GM10248 (cell line): ENCODE measurements at regions of chr11 and their contacts with region 1.

Region 1: GRCh38 chr11:6443269-6444003 is 2.6 kb upstream of the HPX start:
- DNase-seq: peak; percentile 75
- CTCF ChIP-seq: peak; percentile 88

Region 2: GRCh38 chr11:6229911-6230310 is 213.5 kb before region 1 on chr11:
- CTCF ChIA-PET with region 1: no interaction called
- POLR2A ChIA-PET with region 1: no interaction called
- DNase-seq: no peak
- CTCF ChIP-seq: no peak

Region 3: GRCh38 chr11:6353367-6353987 is 90.0 kb before region 1 on chr11:
- CTCF ChIA-PET with region 1: interaction called, 18 read pairs
- POLR2A ChIA-PET with region 1: no interaction called
- DNase-seq: peak; percentile 67
- CTCF ChIP-seq: peak; percentile 95

Region 4: DNA sequence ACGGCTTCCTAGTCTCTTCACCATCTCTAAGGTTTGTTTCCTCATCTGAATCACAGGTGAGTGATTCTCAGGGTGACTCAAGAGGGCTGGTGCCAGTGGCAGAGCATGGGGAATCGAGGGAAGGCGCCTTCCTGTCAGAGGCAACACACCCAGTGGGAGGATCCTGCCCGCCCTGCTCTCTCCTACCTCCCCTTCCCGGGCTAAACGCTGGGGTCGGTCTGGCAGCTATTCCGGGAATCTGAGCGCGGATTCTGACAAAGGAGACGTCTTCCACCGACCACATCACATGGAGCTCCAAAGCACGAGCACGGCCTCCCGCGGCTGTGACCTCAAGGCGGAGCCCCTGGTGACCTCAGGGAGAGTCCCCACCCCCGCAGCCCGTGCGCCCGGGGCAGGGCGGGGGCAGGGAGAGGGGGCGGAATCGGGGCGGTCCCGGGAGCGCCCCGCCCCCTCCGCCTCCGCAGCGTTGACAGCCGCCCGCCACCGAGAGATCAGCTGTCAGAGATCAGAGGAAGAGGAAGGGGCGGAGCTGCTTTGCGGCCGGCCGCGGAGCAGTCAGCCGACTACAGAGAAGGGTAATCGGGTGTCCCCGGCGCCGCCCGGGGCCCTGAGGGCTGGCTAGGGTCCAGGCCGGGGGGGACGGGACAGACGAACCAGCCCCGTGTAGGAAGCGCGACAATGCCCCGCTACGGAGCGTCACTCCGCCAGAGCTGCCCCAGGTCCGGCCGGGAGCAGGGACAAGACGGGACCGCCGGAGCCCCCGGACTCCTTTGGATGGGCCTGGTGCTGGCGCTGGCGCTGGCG is 53.3 kb before region 1 on chr11 and contains the start of gene SMPD1:
- CTCF ChIA-PET with region 1: interaction called, 15 read pairs
- POLR2A ChIA-PET with region 1: no interaction called
- DNase-seq: peak; percentile 97
- CTCF ChIP-seq: no peak

Region 5: DNA sequence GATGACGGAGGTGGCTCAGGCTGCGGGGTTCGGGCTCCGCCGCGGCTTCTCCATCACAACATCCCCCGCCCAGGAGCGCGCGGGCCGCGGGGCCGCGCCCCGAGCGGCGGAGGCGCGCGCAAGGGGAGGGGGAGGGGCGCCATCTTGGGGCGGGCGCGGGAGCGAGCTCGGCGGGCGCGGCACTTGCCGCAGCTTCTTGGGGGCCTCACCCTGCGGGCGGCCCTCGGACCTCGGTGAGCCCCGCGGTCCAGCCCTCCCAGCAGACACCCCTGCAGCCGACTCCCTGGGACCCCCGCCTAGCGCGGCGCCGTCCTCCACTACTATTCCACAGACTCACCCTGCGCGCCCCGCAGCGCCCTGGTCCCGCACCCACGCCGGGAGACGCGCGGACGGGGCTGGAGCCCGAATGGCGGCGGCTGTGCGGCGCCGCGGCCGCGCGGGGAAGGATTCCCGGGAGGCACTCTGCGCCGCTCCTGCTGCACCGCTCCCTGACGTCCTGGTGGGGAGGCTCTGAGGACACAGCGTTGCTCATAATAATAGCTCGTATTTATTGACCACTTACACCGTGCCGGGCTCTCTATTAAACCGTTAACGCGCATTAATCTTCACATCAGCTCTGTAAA is 24.3 kb before region 1 on chr11 and contains the start of gene APBB1:
- CTCF ChIA-PET with region 1: interaction called, 136 read pairs
- POLR2A ChIA-PET with region 1: no interaction called
- DNase-seq: peak; percentile 76
- CTCF ChIP-seq: no peak

Region 6: GRCh38 chr11:6458352-6459098 is 15.1 kb after region 1 on chr11:
- CTCF ChIA-PET with region 1: interaction called, 100 read pairs
- POLR2A ChIA-PET with region 1: no interaction called
- DNase-seq: no peak
- CTCF ChIP-seq: no peak